Activated T-helper 1 cell treated with anti-CD3 and anti-CD28 coated beads, Interleukin-12 subunit alpha, Interleukin-12 subunit beta, Interleukin-2, Interleukin-4 antibody, amounts not matched to agents 30 ng/mL and 10 ng/mL and 1 ng/mL, durations not matched to agents 14 hours and 24 hours and 36 hours (primary cell): ENCODE measurements at regions of chrX and their contacts with region 1.

Region 1: DNA sequence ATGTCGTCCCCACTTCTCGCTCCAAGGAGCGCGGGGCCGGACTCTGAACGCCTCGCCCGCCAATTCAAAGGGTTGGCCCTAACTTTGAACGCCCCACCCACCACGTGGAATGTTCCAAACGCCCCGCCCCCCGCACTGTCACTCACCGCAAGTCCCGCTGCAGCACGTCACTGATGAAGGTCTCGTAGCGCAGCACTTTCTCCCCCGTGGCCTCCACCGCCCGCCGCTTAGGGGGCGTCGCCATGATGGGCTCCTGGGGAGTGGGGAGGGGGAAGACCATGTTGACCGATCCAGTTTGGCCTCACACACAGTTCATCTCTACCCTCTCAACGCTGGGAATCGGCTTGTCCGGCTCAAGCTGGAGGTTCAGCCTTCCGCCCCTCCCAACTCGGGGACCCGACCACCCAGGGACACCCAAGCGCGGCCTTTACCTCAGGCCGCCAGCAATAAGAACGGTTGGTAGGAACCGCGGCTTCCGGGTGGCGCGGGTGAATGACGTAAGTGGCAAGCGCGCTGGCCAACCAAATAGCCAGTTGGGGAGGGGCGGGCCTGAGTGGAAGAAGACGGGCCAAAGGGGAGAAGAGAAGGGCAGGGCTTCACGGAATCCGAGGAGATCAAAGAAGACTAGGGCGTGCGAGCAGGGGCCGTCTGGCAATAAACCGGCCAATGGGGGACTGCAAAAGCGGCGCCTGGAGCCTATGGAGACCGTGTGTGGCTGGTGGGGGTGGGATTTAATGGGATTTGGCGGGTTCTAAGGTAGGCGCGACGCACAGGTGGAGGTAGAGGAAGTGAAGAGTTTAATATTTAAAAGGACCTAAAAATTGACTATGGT is at the start of gene UXT:
- DNase-seq: peak; percentile 89
- H3K4me3 Mint-ChIP-seq: peak within 1 kb of the TSS; percentile 90
- H3K27ac Mint-ChIP-seq: peak within 1 kb of the TSS; percentile 98
- H3K4me1 Mint-ChIP-seq: peaks cover 31% of the 10 kb centered on the region
- H3K27me3 Mint-ChIP-seq: no peaks in the 10 kb centered on the region
- total RNA-seq, gene UXT: 163 and 173 TPM in 2 replicates

Region 2: DNA sequence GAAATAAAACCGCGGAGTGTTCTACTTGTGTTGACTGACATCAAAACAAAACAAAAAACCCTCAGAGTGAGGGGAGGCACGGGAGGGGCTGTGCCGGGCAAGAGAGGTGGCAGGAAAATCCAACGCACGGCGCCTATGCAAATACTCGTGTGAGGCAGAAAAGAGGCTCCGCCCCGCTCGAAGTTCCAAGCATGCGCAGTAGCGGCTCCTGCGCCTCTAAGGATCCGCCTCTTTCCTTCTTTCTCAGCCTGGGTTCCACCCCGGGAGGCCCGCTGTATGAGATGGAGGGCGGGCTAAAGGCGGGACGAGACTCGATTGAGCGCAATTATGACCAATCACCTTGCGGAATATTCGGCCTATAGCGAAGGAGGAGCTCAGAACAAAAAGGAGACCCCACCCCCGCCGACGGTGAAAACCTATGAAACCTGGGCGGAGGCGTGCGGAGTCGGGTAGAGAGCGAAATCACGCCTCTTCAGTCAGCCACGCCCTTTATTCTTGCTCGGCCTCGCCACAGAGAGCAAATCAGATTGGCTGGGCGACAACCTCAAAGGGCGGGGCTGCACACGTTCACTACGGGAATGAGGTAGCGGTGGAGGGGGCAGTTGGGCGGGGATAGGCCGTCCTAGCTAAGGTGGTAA is 441.1 kb before region 1 on chrX:
- intact Hi-C with region 1: loop called (anchors 2 kb)
- DNase-seq: peak; percentile 92
- H3K4me3 Mint-ChIP-seq: peak overlapping the region; percentile 90
- H3K27ac Mint-ChIP-seq: peak overlapping the region; percentile 97
- H3K4me1 Mint-ChIP-seq: peaks cover 41% of the 10 kb centered on the region
- H3K27me3 Mint-ChIP-seq: no peaks in the 10 kb centered on the region

Region 3: GRCh38 chrX:47482512-47483309 is 176.2 kb before region 1 on chrX and contains the start of gene ZNF41:
- intact Hi-C with region 1: loop called (anchors 1 kb)
- DNase-seq: peak; percentile 63
- H3K4me3 Mint-ChIP-seq: peak within 1 kb of the TSS; percentile 92
- H3K27ac Mint-ChIP-seq: peak within 1 kb of the TSS; percentile 91
- H3K4me1 Mint-ChIP-seq: peaks cover 26% of the 10 kb centered on the region
- H3K27me3 Mint-ChIP-seq: no peaks in the 10 kb centered on the region
- total RNA-seq, gene ZNF41: 10.7 and 10.9 TPM in 2 replicates

Region 4: GRCh38 chrX:47633689-47634590 is 25.0 kb before region 1 on chrX:
- intact Hi-C with region 1: loop called (anchors 1 kb)
- DNase-seq: no peak
- H3K4me3 Mint-ChIP-seq: no peak overlapping the region
- H3K27ac Mint-ChIP-seq: no peak overlapping the region
- H3K4me1 Mint-ChIP-seq: peaks cover 27% of the 10 kb centered on the region
- H3K27me3 Mint-ChIP-seq: peaks cover 2% of the 10 kb centered on the region

Region 5: DNA sequence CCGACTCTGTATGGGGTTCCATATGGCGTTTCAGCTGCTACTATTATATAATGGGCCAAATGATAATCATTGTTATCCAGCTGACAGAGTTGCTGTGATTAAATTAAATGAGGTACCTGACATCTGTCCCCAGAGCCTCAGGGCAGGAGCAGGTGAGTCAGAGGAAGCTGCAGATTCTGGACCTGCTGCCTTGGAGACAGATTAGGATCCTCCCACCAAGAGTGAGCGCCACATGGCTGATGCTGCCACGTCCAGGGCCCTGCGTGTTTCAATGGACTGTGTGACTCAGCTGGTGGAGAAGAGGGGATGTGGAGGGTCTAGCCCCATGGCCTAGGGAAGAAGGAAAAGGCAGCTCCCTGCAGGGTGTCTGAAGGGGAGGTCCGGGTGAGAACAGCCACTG is 28.4 kb after region 1 on chrX:
- intact Hi-C with region 1: no loop called
- DNase-seq: no peak
- H3K4me3 Mint-ChIP-seq: no peak overlapping the region
- H3K27ac Mint-ChIP-seq: no peak overlapping the region
- H3K4me1 Mint-ChIP-seq: peaks cover 6% of the 10 kb centered on the region
- H3K27me3 Mint-ChIP-seq: peaks cover 6% of the 10 kb centered on the region

Region 6: DNA sequence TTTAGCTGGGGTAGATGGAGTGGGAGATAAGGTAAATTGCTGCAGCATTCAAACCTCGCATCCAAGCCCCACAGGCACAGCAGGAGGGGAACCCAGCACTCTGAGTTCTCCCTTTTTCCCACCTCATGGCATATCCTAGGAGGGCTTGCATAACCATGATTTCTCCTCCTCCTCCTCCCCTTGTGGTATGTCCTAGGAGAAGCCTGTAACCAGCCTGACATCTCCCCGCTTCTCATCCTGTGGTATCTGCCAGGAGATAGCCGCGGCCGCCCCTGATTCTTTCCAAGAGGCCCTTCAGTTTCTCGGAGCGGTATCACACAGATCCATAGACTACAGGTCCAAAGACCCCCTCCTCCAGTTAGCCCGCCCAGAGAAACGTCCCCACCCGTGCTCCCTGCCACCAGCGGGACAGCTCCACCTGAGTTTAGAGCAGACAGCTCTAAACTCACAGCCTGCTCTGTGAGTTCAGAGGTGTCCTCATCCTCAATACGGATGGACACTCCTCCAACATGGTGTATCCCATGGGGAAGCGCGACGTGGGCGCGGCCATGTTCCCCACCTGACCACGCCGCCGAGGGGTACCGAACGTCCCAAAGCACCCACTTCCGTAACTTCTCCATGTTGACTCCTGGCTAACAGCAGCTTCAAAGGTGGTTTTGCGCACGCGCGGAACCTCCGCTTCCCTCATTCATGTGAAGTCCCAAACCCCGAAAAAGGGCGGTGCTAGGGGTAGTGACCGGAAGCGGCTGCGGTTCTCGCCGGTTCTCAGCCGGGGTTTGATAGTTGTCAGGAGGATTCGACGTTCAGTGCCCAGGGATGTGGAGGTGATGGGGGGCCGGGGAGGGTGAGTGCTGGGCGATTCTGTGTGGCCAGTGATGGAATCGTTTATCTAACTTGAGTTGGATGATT is 177.5 kb after region 1 on chrX and contains the start of gene ZNF81:
- intact Hi-C with region 1: loop called (anchors 1 kb)
- DNase-seq: peak; percentile 87
- H3K4me3 Mint-ChIP-seq: peak within 1 kb of the TSS; percentile 98
- H3K27ac Mint-ChIP-seq: peak within 1 kb of the TSS; percentile 97
- H3K4me1 Mint-ChIP-seq: peaks cover 13% of the 10 kb centered on the region
- H3K27me3 Mint-ChIP-seq: no peaks in the 10 kb centered on the region
- total RNA-seq, gene ZNF81: 5.9 and 9.2 TPM in 2 replicates

Region 7: GRCh38 chrX:48521353-48522243 is 862.7 kb after region 1 on chrX and contains the start of gene EBP:
- intact Hi-C with region 1: loop called (anchors 5 kb)
- DNase-seq: peak; percentile 92
- H3K4me3 Mint-ChIP-seq: peak within 1 kb of the TSS; percentile 95
- H3K27ac Mint-ChIP-seq: peak within 1 kb of the TSS; percentile 98
- H3K4me1 Mint-ChIP-seq: peaks cover 34% of the 10 kb centered on the region
- H3K27me3 Mint-ChIP-seq: no peaks in the 10 kb centered on the region
- total RNA-seq, gene EBP: 164 and 178 TPM in 2 replicates